HCT116 (cell line): ENCODE measurements at regions of chr19 and their contacts with region 1.

Region 1: GRCh38 chr19:35995048-35995993 is at the start of gene SDHAF1:
- DNase-seq: peak; percentile 85
- ATAC-seq: peak; percentile 86
- H3K4me3 ChIP-seq: peak within 1 kb of the TSS; percentile 84 to 94
- H3K27ac ChIP-seq: peak within 1 kb of the TSS; percentile 83
- H3K4me1 ChIP-seq: peaks cover 12 to 20% of the 10 kb centered on the region in 2 experiments
- H3K27me3 ChIP-seq: no peaks in the 10 kb centered on the region
- CTCF ChIP-seq: no peak
- POLR2A ChIP-seq: peak; percentile 17
- RAD21 ChIP-seq: no peak
- total RNA-seq, gene SDHAF1: 21.0 TPM

Region 2: GRCh38 chr19:36032251-36033104 is 37.2 kb after region 1 on chr19 and contains the start of gene CLIP3:
- CTCF ChIA-PET with region 1: no interaction called
- POLR2A ChIA-PET with region 1: no interaction called
- RAD21 ChIA-PET with region 1: no interaction called
- intact Hi-C with region 1: no loop called
- DNase-seq: no peak
- ATAC-seq: no peak
- H3K4me3 ChIP-seq: no peak within 1 kb of the TSS
- H3K27ac ChIP-seq: no peak within 1 kb of the TSS
- H3K4me1 ChIP-seq: no peaks in the 10 kb centered on the region
- H3K27me3 ChIP-seq: no peaks in the 10 kb centered on the region
- CTCF ChIP-seq: no peak
- POLR2A ChIP-seq: no peak
- RAD21 ChIP-seq: no peak
- total RNA-seq, gene CLIP3: 1.5 TPM

Region 3: GRCh38 chr19:36054119-36054732 is 58.9 kb after region 1 on chr19 and contains the start of gene THAP8:
- CTCF ChIA-PET with region 1: no interaction called
- POLR2A ChIA-PET with region 1: no interaction called
- RAD21 ChIA-PET with region 1: no interaction called
- intact Hi-C with region 1: loop called (anchors 1 kb)
- DNase-seq: peak; percentile 97
- ATAC-seq: peak; percentile 86
- H3K4me3 ChIP-seq: peak within 1 kb of the TSS; percentile 51 to 74
- H3K27ac ChIP-seq: peak within 1 kb of the TSS; percentile 95
- H3K4me1 ChIP-seq: peaks cover 19 to 43% of the 10 kb centered on the region in 2 experiments
- H3K27me3 ChIP-seq: no peaks in the 10 kb centered on the region
- CTCF ChIP-seq: peak in 2 of 3 experiments; percentile 49; a peak in 2 of 6 replicates
- POLR2A ChIP-seq: peak; percentile 56
- RAD21 ChIP-seq: 0 out of 2 replicates have a peak, but pooled peaks have one; percentile 11
- total RNA-seq, gene THAP8: 1.7 TPM